ENCODE measurements at regions of chr13 and their contacts with region 1.

Region 1: DNA sequence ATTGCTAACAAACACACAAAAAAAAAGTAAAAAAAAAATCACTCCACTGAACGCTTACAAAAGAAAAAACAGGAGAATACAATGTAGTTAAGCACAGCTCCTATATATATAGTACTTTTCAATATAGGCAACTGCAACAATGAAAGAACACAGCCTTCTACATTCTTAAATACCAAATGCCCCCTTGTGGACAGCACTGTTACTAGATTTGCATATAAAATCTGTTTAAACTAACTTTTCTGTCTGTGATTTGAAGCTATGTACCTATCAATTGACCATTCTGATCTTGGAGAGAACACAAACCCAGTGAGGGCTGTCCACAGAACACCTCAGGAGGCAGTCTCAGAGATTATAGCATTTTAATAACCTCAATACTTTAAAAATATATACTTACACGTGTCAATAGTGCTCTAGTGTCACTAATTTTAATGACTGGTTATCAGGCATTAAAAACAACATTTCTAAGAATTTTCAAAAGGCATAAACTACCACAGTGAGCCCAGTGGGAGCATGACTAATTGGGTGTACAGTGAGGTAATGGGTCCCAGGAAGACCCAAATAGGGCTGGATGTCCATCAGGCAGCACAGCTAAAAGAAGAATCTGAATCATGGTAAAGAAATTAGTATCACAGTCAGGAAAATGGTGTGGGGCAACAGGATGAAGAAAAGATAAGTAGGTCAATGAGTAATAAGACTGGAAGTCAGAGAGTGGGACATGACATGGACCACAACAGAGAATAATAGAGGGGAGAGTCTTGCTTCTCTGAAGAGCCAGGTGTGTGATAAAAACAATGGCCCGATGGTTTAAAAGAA is 22.2 kb downstream of the CCDC169 start:
- DNase-seq: peak in 1 of 2 donors; percentile 36
- H3K4me3 ChIP-seq: no peak overlapping the region
- H3K27ac ChIP-seq: no peak overlapping the region
- H3K4me1 ChIP-seq: no peaks in the 10 kb centered on the region
- H3K27me3 ChIP-seq: no peaks in the 10 kb centered on the region
- CTCF ChIP-seq: peak; percentile 64 to 83

Region 2: GRCh38 chr13:35729926-35730627 is 545.3 kb before region 1 on chr13:
- intact Hi-C with region 1: no loop called
- DNase-seq: no peak
- H3K4me3 ChIP-seq: no peak overlapping the region
- H3K27ac ChIP-seq: no peak overlapping the region
- H3K4me1 ChIP-seq: no peaks in the 10 kb centered on the region
- H3K27me3 ChIP-seq: no peaks in the 10 kb centered on the region
- CTCF ChIP-seq: no peak

Region 3: DNA sequence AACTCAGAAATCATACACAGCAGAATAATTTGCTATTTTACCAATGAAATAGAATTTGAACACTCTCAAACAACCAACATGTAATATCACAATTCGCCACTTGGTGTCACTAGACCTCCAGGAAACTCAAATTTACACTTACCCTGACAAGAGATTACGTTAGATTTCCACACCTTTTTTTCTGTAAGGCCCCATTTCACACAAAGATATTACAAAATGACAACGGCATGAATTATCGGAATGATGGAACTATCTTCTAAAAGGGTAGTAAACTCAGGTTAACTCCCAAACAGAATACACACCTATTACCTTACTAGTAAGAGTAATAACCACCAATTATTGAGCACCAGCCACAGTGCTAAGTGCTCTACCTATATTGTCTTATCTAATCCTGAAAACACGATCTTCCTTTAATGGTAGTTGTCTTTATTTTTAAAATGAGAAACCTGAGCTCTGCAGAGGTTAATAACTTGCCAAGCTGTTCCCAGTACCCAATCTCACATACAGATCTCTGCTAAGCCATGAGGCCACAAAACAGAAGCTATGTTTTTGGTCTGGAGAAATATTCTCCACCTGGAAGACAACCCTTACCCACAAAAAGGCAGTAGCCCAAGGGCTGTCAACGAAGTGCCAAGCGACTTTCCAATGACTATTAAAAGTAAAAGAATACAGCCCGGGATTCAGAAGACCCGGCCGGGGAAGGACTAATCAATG is 296.6 kb before region 1 on chr13:
- intact Hi-C with region 1: loop called (anchors 5 kb)
- DNase-seq: peak in 1 of 2 donors; percentile 49
- H3K4me3 ChIP-seq: peak overlapping the region in 1 of 2 donors; percentile 21
- H3K27ac ChIP-seq: peak overlapping the region; percentile 71 to 75
- H3K4me1 ChIP-seq: peaks cover 0 to 17% (median 10%) of the 10 kb centered on the region in 4 donors
- H3K27me3 ChIP-seq: no peaks in the 10 kb centered on the region
- CTCF ChIP-seq: peak; percentile 80 to 89